RWPE1 (cell line): ENCODE measurements at regions of chr6 and their contacts with region 1.

Region 1: GRCh38 chr6:87932361-87932760 is 115.3 kb upstream of the SPACA1 start:
- DNase-seq: no peak
- H3K27ac ChIP-seq: no peak overlapping the region
- CTCF ChIP-seq: no peak

Region 2: DNA sequence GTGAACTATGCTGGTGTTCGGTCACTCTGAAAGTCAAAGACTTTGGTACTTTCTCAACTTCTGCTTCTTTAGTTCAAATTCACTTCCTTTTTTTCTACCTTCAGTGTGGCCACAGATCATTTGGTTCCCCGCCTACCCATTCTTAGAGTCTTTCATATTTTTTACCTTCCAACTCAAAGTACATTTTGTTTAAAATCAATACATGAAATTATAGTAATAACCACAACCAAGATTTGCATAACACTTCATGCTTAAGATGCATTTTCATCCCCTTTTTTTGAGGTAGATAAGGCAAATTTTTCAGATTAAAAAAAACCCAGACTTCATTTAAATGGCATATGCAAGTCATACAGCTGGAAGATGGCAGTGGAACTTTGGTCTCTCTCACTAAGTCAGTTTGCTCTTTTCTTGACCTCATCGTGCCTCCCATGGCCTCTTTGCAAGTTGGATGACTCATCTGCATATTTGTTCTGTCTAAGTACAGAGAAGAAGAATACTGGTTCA is 245.7 kb after region 1 on chr6:
- CTCF ChIA-PET with region 1: no interaction called
- POLR2A ChIA-PET with region 1: no interaction called
- DNase-seq: peak; percentile 23
- H3K27ac ChIP-seq: no peak overlapping the region
- CTCF ChIP-seq: no peak

Region 3: GRCh38 chr6:88908598-88909548 is 976.5 kb after region 1 on chr6:
- CTCF ChIA-PET with region 1: interaction called, 11 read pairs
- POLR2A ChIA-PET with region 1: no interaction called
- DNase-seq: no peak
- H3K27ac ChIP-seq: no peak overlapping the region
- CTCF ChIP-seq: no peak